Activated CD4-positive, alpha-beta memory T cell treated with anti-CD3 and anti-CD28 coated beads, Interleukin-2, amount 10 ng/mL, durations not matched to agents 7 days and 5 days (primary cell): ENCODE measurements at regions of chr11 and their contacts with region 1.

Region 1: GRCh38 chr11:65652511-65653231 is 10.0 kb downstream of the RELA start:
- DNase-seq: peak; percentile 96
- H3K4me3 Mint-ChIP-seq: peak overlapping the region; percentile 74
- H3K27ac Mint-ChIP-seq: peak overlapping the region; percentile 93
- H3K4me1 Mint-ChIP-seq: peaks cover 50% of the 10 kb centered on the region
- H3K27me3 Mint-ChIP-seq: no peaks in the 10 kb centered on the region

Region 2: GRCh38 chr11:65662799-65663638 is 10.3 kb after region 1 on chr11 and contains the start of gene RELA:
- CTCF ChIA-PET with region 1: interaction called, 4 read pairs
- POLR2A ChIA-PET with region 1: interaction called, 45 read pairs
- DNase-seq: peak; percentile 91
- H3K4me3 Mint-ChIP-seq: peak within 1 kb of the TSS; percentile 89
- H3K27ac Mint-ChIP-seq: peak within 1 kb of the TSS; percentile 93
- H3K4me1 Mint-ChIP-seq: peaks cover 37% of the 10 kb centered on the region
- H3K27me3 Mint-ChIP-seq: no peaks in the 10 kb centered on the region
- total RNA-seq, gene RELA: 91.2 to 102 TPM